ENCODE measurements at regions of chr12 and their contacts with region 1.

Region 1: GRCh38 chr12:51980051-51980808 is 26.5 kb upstream of the TAMALIN start:
- DNase-seq: no peak
- H3K4me3 ChIP-seq: no peak overlapping the region
- H3K27me3 ChIP-seq: no peaks in the 10 kb centered on the region
- CTCF ChIP-seq: peak; percentile 96

Region 2: DNA sequence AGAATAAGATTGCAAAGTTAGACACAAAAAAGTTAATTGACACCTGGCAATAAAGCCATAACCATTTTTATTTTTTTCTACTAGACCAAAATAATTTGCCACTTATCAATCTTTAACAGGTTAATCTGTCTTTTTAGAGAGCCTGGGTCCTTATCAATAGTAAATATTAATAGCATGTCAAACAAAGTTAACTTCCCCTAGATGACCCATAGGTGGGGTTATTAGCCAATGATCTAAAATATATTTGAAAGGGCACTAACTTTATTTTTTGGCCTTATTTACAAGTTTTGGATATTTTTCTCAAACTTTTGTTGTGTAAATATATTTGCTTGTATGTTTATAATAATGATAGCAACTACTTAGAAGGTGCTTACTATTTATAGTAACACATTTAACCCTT is 88.4 kb before region 1 on chr12:
- CTCF ChIA-PET with region 1: interaction called, 28 read pairs
- POLR2A ChIA-PET with region 1: no interaction called
- DNase-seq: no peak
- H3K4me3 ChIP-seq: no peak overlapping the region
- H3K27me3 ChIP-seq: no peaks in the 10 kb centered on the region
- CTCF ChIP-seq: peak; percentile 36; the same call in 1 of the 2 replicates

Region 3: GRCh38 chr12:51898937-51899336 is 81.3 kb before region 1 on chr12:
- CTCF ChIA-PET with region 1: interaction called, 28 read pairs
- POLR2A ChIA-PET with region 1: no interaction called
- DNase-seq: no peak
- H3K4me3 ChIP-seq: no peak overlapping the region
- H3K27me3 ChIP-seq: no peaks in the 10 kb centered on the region
- CTCF ChIP-seq: no peak

Measured in BJ (cell line).